Vagina (tissue), 2 donors: ENCODE measurements at regions of chr6 and their contacts with region 1.

Region 1: DNA sequence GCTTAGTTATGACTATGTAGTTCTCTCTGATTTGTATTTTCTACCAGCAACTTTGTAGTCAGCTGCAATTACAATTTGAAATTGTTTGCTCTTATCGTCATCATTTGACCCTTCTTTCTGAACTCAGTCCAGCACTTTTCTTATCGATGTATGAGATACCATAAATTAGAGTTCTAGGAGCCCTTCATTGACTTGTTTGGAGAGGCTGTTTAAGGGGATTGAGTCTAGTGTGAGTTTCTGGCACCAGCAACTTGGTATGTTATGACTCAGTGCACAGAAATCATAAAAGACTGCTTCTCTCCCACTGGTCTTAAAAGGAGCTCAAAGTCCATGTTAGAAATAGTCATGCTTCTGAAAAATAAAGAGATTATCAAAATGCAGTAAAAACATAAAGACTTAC is 190.3 kb downstream of the TENT5A start:
- DNase-seq: no peak
- H3K4me3 ChIP-seq: no peak overlapping the region
- H3K27ac ChIP-seq: peak overlapping the region; percentile 44
- H3K4me1 ChIP-seq: peaks cover 6% of the 10 kb centered on the region
- H3K27me3 ChIP-seq: no peaks in the 10 kb centered on the region
- CTCF ChIP-seq: no peak
- POLR2A ChIP-seq: no peak

Region 2: GRCh38 chr6:81098109-81098814 is 463.9 kb before region 1 on chr6:
- intact Hi-C with region 1: loop called (anchors 5 kb)
- DNase-seq: no peak
- H3K4me3 ChIP-seq: no peak overlapping the region
- H3K27ac ChIP-seq: no peak overlapping the region
- H3K4me1 ChIP-seq: no peaks in the 10 kb centered on the region
- H3K27me3 ChIP-seq: no peaks in the 10 kb centered on the region
- CTCF ChIP-seq: no peak
- POLR2A ChIP-seq: no peak